ENCODE measurements at regions of chr9 and their contacts with region 1.

Region 1: GRCh38 chr9:7570107-7570720 is 229.4 kb downstream of the DMAC1 start:
- DNase-seq: peak; percentile 20 to 80 (median 53)
- ATAC-seq: peak; percentile 72
- H3K4me3 ChIP-seq: no peak overlapping the region
- H3K4me3 Mint-ChIP-seq: no peak overlapping the region
- H3K27ac ChIP-seq: no peak overlapping the region
- H3K27ac Mint-ChIP-seq: no peak overlapping the region
- H3K4me1 ChIP-seq: no peaks in the 10 kb centered on the region
- H3K4me1 Mint-ChIP-seq: no peaks in the 10 kb centered on the region
- H3K27me3 ChIP-seq: peaks cover 0 to 6% of the 10 kb centered on the region in 2 experiments
- H3K27me3 Mint-ChIP-seq: peaks cover 10% of the 10 kb centered on the region
- CTCF ChIP-seq: peak; percentile 96

Region 2: DNA sequence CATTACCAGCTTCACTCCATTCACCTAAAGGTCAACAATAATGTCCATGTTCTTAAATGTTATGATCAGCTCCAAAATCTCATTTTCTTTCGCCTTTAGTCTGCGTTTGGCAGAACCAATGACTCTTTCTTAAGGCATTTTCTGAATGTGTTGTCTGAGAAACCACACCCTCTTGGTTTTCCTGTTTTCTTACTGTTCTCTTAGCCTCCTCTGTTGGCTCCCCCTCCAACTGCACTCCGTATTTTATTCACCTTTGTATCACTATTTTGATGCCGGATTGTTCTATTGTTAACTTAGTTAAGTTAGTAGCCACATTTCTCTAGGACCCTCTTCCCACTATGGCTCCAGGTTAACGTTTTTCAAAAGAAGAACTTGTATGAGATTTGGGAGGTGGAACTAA is 43.7 kb after region 1 on chr9:
- CTCF ChIA-PET with region 1: no interaction called
- POLR2A ChIA-PET with region 1: no interaction called
- intact Hi-C with region 1: loop called (anchors 1 to 2 kb)
- DNase-seq: peak in 5 of 14 experiments; percentile 2 to 68 (median 51)
- ATAC-seq: peak; percentile 87
- H3K4me3 ChIP-seq: peak overlapping the region; percentile 1
- H3K4me3 Mint-ChIP-seq: peak overlapping the region; percentile 48
- H3K27ac ChIP-seq: peak overlapping the region in 1 of 2 donors; percentile 9
- H3K27ac Mint-ChIP-seq: peak overlapping the region; percentile 66
- H3K4me1 ChIP-seq: peaks cover 16% of the 10 kb centered on the region
- H3K4me1 Mint-ChIP-seq: peaks cover 41% of the 10 kb centered on the region
- H3K27me3 ChIP-seq: no peaks in the 10 kb centered on the region
- H3K27me3 Mint-ChIP-seq: no peaks in the 10 kb centered on the region
- CTCF ChIP-seq: peak; percentile 62

Region 3: DNA sequence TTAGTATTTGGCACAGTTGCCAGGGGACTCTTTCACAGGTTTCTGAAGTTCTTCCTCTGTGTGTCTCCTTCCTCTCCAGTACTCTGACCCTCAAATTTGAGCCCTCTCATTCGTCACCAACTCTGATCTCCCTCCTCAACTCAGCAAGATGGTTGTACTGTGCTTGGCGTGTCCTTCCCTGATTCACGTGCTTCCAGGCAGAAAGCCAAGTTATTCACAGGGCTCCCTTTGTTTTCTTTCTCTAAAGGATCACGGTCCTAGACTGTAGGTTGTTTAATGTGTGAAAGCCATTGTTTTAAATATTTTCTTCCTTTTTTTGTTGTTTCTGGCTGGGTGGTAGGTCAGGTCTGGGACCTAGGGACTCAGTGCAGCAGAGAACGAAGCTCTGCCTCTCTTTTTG is 86.4 kb after region 1 on chr9:
- CTCF ChIA-PET with region 1: interaction called, 3 read pairs
- POLR2A ChIA-PET with region 1: interaction called, 3 read pairs
- intact Hi-C with region 1: loop called in 1 of 2 experiments (anchors 5 kb)
- DNase-seq: no peak
- ATAC-seq: no peak
- H3K4me3 ChIP-seq: no peak overlapping the region
- H3K4me3 Mint-ChIP-seq: no peak overlapping the region
- H3K27ac ChIP-seq: no peak overlapping the region
- H3K27ac Mint-ChIP-seq: no peak overlapping the region
- H3K4me1 ChIP-seq: no peaks in the 10 kb centered on the region
- H3K4me1 Mint-ChIP-seq: peaks cover 6% of the 10 kb centered on the region
- H3K27me3 ChIP-seq: no peaks in the 10 kb centered on the region
- H3K27me3 Mint-ChIP-seq: no peaks in the 10 kb centered on the region
- CTCF ChIP-seq: no peak

Region 4: DNA sequence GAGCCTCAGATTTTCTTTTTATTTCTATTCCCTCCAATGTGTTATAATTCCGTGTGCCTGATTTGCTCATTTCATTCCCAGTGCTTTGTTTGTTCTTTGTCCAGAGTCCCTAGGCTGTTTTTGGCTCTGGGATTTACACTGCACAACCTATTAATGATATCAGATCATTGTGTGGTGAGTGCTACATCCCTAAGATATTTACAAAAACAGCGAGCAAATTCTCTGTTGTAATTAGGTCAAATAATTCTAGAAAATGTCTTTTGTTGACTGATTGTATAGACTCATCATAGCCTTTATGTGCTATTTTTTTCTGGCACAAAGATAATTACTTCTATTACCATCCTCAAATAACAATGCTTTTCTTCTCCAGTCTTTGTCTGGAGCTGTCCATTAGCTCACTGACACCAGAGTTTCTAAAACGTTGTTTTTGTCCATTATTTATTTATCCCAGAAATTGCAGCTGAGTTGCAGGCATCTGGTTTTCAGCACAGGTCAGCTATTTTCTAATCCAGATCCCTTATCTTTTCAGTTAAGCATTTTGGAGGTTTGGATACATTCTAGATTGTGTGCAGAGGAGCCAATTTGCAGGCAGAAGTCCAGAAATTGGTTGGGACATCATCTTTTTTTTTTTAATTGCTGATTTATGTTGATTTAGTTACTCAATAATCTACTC is 609.3 kb after region 1 on chr9:
- CTCF ChIA-PET with region 1: no interaction called
- POLR2A ChIA-PET with region 1: no interaction called
- intact Hi-C with region 1: loop called (anchors 1 to 5 kb)
- DNase-seq: no peak
- ATAC-seq: no peak
- H3K4me3 ChIP-seq: no peak overlapping the region
- H3K4me3 Mint-ChIP-seq: no peak overlapping the region
- H3K27ac ChIP-seq: no peak overlapping the region
- H3K27ac Mint-ChIP-seq: no peak overlapping the region
- H3K4me1 ChIP-seq: no peaks in the 10 kb centered on the region
- H3K4me1 Mint-ChIP-seq: no peaks in the 10 kb centered on the region
- H3K27me3 ChIP-seq: peaks cover 0 to 3% of the 10 kb centered on the region in 2 experiments
- H3K27me3 Mint-ChIP-seq: no peaks in the 10 kb centered on the region
- CTCF ChIP-seq: no peak

Region 5: DNA sequence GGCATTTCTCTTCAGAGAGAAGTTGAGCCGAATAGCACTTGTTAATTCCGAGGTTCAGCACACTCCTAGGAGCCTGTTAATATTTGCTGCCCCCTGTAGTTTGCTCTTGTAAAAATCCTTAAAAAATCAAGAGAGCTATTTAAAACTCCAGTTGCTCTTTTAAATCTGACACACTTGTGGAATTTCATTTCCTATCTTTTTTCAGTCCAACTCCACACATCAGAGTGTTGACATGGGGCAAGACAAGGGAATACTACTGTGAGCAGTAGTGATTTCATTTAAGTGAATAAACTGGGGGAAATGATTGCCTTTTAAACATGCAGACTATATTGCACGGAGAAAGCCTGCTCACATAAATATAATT is 1325.6 kb after region 1 on chr9:
- CTCF ChIA-PET with region 1: no interaction called
- POLR2A ChIA-PET with region 1: no interaction called
- intact Hi-C with region 1: loop called in 1 of 2 experiments (anchors 10 kb)
- DNase-seq: peak in 3 of 14 experiments; percentile 9 to 24 (median 21)
- ATAC-seq: no peak
- H3K4me3 ChIP-seq: no peak overlapping the region
- H3K4me3 Mint-ChIP-seq: no peak overlapping the region
- H3K27ac ChIP-seq: no peak overlapping the region
- H3K27ac Mint-ChIP-seq: no peak overlapping the region
- H3K4me1 ChIP-seq: no peaks in the 10 kb centered on the region
- H3K4me1 Mint-ChIP-seq: no peaks in the 10 kb centered on the region
- H3K27me3 ChIP-seq: no peaks in the 10 kb centered on the region
- H3K27me3 Mint-ChIP-seq: no peaks in the 10 kb centered on the region
- CTCF ChIP-seq: no peak